ENCODE measurements at regions of chr5 and their contacts with region 1.

Region 1: DNA sequence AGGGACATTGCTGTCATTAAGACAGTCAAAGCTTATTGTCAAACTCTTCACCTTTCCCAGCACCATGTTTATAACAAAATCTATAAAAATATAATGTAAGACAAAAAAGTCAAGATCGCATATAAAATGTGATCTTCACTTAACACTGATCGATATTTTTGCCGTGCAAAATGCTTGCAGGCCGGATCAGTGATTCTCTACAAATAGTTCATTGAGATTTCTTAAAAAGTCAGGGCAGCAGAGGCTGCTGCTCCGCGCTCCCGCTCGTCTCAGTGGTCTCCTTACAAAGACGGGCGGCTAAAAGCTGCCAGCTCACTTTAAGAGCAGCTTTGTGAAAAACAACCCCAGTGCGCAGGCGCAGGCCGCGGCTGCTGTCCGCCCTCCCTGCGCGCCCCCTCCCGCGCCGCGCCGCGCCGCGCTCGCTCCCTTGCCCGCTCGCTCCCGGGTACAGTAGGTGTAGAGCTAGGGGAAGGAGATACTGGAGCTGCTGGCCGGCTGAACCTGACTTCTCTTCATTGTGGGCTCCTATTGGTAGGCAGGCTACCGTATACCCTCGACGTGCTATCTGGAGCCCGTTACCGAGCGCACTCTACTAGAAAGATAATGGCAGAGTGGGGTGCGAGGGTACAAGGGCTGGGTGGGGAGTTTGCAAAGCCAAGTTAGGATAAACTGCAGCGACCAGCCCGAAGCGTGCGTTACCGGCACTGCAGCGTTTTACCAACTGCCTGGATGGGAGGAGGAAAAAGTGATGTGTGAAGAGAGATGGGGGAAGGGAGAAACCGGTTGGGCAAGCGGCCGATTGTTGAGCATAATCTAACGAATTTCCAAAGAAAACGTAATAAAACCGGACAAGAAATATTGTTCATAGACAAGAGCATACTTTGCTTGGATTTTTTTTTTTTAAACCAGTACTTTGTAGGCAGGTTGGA is at the start of gene ARRDC3:
- DNase-seq: peak; percentile 81 to 98 (median 88)
- ATAC-seq: peak; percentile 64
- H3K4me3 ChIP-seq: peak within 1 kb of the TSS; percentile 60
- H3K27ac ChIP-seq: peak within 1 kb of the TSS; percentile 96
- H3K4me1 ChIP-seq: no peaks in the 10 kb centered on the region
- H3K27me3 ChIP-seq: no peaks in the 10 kb centered on the region
- CTCF ChIP-seq: no peak
- EP300 ChIP-seq: peak; percentile 23
- POLR2A ChIP-seq: peak; percentile 99
- RAD21 ChIP-seq: peak in 1 of 2 experiments; percentile 16; a peak in 1 of 4 replicates
- polyA plus RNA-seq, gene ARRDC3: 23.8 to 30.2 TPM

Region 2: GRCh38 chr5:90119531-90120006 is 1263.7 kb before region 1 on chr5:
- CTCF ChIA-PET with region 1: no interaction called
- POLR2A ChIA-PET with region 1: no interaction called
- in situ Hi-C with region 1: no loop called
- intact Hi-C with region 1: no loop called
- DNase-seq: no peak
- ATAC-seq: no peak
- H3K4me3 ChIP-seq: no peak overlapping the region
- H3K27ac ChIP-seq: no peak overlapping the region
- H3K4me1 ChIP-seq: no peaks in the 10 kb centered on the region
- H3K27me3 ChIP-seq: no peaks in the 10 kb centered on the region
- CTCF ChIP-seq: no peak
- EP300 ChIP-seq: no peak
- POLR2A ChIP-seq: no peak
- RAD21 ChIP-seq: no peak

Region 3: DNA sequence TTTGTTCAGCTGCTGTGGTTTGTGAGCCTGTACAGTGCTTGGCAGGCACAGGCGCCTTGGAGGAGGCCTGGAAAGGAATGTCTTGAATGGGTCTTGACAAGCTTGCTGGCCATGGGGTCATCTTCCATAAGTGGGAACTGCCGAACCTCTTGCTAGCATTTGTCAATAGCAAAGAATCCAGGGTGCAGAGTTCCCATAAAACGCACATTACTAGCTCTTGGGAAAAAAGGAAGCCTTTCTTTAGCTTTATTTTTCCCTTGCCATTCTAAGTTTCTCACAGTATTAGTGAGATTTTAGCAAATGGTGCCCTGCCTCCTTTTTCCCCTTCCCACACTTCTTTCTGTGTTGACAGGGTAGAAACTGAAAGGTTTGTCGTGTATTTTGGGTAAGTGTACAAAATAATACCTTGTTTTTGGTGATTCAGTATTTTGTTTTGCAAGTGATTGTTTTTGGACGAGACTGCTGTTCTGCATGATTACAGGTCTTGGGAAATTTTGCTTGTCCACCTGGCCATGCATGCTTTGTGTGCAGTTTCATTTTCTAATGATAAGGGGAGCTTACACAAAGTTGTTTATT is 742.7 kb before region 1 on chr5:
- CTCF ChIA-PET with region 1: no interaction called
- POLR2A ChIA-PET with region 1: interaction called, 3 read pairs
- in situ Hi-C with region 1: no loop called
- intact Hi-C with region 1: loop called (anchors 1 kb)
- DNase-seq: peak in 1 of 4 experiments; percentile 78
- ATAC-seq: peak; percentile 58
- H3K4me3 ChIP-seq: peak overlapping the region; percentile 1; the same call in 1 of the 2 replicates
- H3K27ac ChIP-seq: peak overlapping the region; percentile 93
- H3K4me1 ChIP-seq: peaks cover 0 to 29% of the 10 kb centered on the region in 2 experiments; a peak in 4 of 5 replicates
- H3K27me3 ChIP-seq: no peaks in the 10 kb centered on the region
- CTCF ChIP-seq: no peak
- EP300 ChIP-seq: peak; percentile 13; the same call in 1 of the 2 replicates
- POLR2A ChIP-seq: no peak
- RAD21 ChIP-seq: no peak

Region 4: GRCh38 chr5:91101600-91102379 is 281.5 kb before region 1 on chr5:
- CTCF ChIA-PET with region 1: interaction called, 104 read pairs
- POLR2A ChIA-PET with region 1: interaction called, 7 read pairs
- in situ Hi-C with region 1: loop called (anchors 10 kb)
- intact Hi-C with region 1: loop called (anchors 1 kb)
- DNase-seq: peak; percentile 54 to 70 (median 63)
- ATAC-seq: peak; percentile 99
- H3K4me3 ChIP-seq: no peak overlapping the region
- H3K27ac ChIP-seq: no peak overlapping the region
- H3K4me1 ChIP-seq: no peaks in the 10 kb centered on the region
- H3K27me3 ChIP-seq: no peaks in the 10 kb centered on the region
- CTCF ChIP-seq: peak; percentile 65 to 86 (median 69)
- EP300 ChIP-seq: no peak
- POLR2A ChIP-seq: no peak
- RAD21 ChIP-seq: peak; percentile 79 to 93

Region 5: GRCh38 chr5:91225848-91226686 is 157.2 kb before region 1 on chr5:
- CTCF ChIA-PET with region 1: interaction called, 62 read pairs
- POLR2A ChIA-PET with region 1: interaction called, 8 read pairs
- in situ Hi-C with region 1: no loop called
- intact Hi-C with region 1: loop called (anchors 1 kb)
- DNase-seq: peak in 2 of 4 experiments; percentile 34 to 50
- ATAC-seq: peak; percentile 79
- H3K4me3 ChIP-seq: no peak overlapping the region
- H3K27ac ChIP-seq: no peak overlapping the region
- H3K4me1 ChIP-seq: no peaks in the 10 kb centered on the region
- H3K27me3 ChIP-seq: no peaks in the 10 kb centered on the region
- CTCF ChIP-seq: peak; percentile 52 to 70 (median 57); a peak in 5 of 6 replicates
- EP300 ChIP-seq: no peak
- POLR2A ChIP-seq: no peak
- RAD21 ChIP-seq: peak; percentile 85 to 93

Region 6: DNA sequence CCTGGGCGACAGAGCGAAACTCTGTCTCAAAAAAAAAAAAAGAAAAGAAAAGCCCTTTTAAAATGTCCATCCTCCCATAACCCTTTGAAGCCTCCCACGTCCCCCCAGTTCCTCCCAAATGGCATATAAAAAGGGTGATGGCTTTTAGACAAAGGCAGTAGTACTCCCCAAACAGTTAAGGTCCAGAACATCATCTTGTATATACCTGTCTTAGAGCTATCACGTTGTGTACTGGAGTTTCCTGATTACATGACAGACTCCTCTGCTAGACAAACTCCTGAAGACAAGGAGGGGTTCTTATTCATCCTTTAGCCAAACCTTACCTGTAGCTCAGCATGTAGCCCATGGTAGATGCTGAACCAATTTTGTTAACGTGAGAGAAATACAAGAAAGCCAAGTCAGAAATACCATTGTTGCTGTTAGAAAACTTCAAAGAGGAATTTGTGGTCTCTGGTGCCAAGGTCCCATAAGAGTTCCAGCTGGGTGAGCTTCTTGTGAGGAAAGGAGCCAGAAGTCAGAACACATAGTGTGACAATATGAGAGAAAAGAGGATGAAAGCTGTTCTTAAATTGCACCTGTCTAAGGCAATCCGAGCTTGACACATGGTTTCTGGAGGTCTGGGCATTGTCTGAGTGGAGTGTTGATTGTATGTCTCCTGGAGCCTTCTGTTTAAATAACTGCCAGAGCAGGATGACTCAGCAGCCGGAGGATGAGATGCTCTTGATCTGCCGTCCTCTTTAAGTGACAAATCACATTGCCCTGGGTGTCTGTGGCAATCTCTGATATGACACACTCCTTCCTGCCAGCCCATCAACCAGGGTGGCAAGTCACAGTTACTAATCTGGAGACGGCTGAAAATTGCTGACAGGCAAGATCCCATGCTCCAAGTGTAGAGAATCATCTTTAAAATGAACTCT is 69.3 kb before region 1 on chr5:
- CTCF ChIA-PET with region 1: no interaction called
- POLR2A ChIA-PET with region 1: interaction called, 13 read pairs
- in situ Hi-C with region 1: no loop called
- intact Hi-C with region 1: no loop called
- DNase-seq: peak; percentile 70 to 93 (median 80)
- ATAC-seq: peak; percentile 95
- H3K4me3 ChIP-seq: no peak overlapping the region
- H3K27ac ChIP-seq: peak overlapping the region; percentile 63
- H3K4me1 ChIP-seq: peaks cover 4 to 20% of the 10 kb centered on the region in 2 experiments; a peak in 4 of 5 replicates
- H3K27me3 ChIP-seq: no peaks in the 10 kb centered on the region
- CTCF ChIP-seq: no peak
- EP300 ChIP-seq: peak; percentile 90
- POLR2A ChIP-seq: 0 out of 2 replicates have a peak, but pooled peaks have one; percentile 31
- RAD21 ChIP-seq: peak; percentile 11 to 15; a peak in 1 of 4 replicates

Region 7: GRCh38 chr5:91419571-91420537 is 36.6 kb after region 1 on chr5:
- CTCF ChIA-PET with region 1: interaction called, 15 read pairs
- POLR2A ChIA-PET with region 1: interaction called, 10 read pairs
- in situ Hi-C with region 1: no loop called
- intact Hi-C with region 1: no loop called
- DNase-seq: peak; percentile 19 to 77 (median 41)
- ATAC-seq: peak; percentile 74
- H3K4me3 ChIP-seq: no peak overlapping the region
- H3K27ac ChIP-seq: no peak overlapping the region
- H3K4me1 ChIP-seq: no peaks in the 10 kb centered on the region
- H3K27me3 ChIP-seq: no peaks in the 10 kb centered on the region
- CTCF ChIP-seq: peak; percentile 49 to 76 (median 52); a peak in 5 of 6 replicates
- EP300 ChIP-seq: no peak
- POLR2A ChIP-seq: no peak
- RAD21 ChIP-seq: peak; percentile 81 to 85